Naive thymus-derived CD4-positive, alpha-beta T cell (primary cell): ENCODE measurements at regions of chr12 and their contacts with region 1.

Region 1: GRCh38 chr12:123131879-123132452 is 18.9 kb downstream of the PITPNM2 start:
- DNase-seq: peak in 8 of 9 donors; percentile 34 to 83 (median 71)
- ATAC-seq: peak; percentile 96
- H3K4me3 ChIP-seq: peak overlapping the region; percentile 24
- H3K4me3 Mint-ChIP-seq: peak overlapping the region; percentile 75 to 83 (median 79)
- H3K27ac ChIP-seq: peak overlapping the region; percentile 84
- H3K27ac Mint-ChIP-seq: peak overlapping the region; percentile 89 to 98 (median 95)
- H3K4me1 ChIP-seq: peaks cover 0 to 27% of the 10 kb centered on the region in 2 donors
- H3K4me1 Mint-ChIP-seq: peaks cover 24 to 70% (median 55%) of the 10 kb centered on the region in 7 donors
- H3K27me3 ChIP-seq: no peaks in the 10 kb centered on the region
- H3K27me3 Mint-ChIP-seq: no peaks in the 10 kb centered on the region

Region 2: GRCh38 chr12:122740351-122740750 is 391.6 kb before region 1 on chr12:
- CTCF ChIA-PET with region 1: no interaction called
- POLR2A ChIA-PET with region 1: no interaction called
- intact Hi-C with region 1: no loop called
- DNase-seq: no peak
- ATAC-seq: no peak
- H3K4me3 ChIP-seq: no peak overlapping the region
- H3K4me3 Mint-ChIP-seq: no peak overlapping the region
- H3K27ac ChIP-seq: no peak overlapping the region
- H3K27ac Mint-ChIP-seq: no peak overlapping the region
- H3K4me1 ChIP-seq: no peaks in the 10 kb centered on the region
- H3K4me1 Mint-ChIP-seq: peaks cover 0 to 8% (median 0%) of the 10 kb centered on the region in 7 donors
- H3K27me3 ChIP-seq: no peaks in the 10 kb centered on the region
- H3K27me3 Mint-ChIP-seq: no peaks in the 10 kb centered on the region

Region 3: DNA sequence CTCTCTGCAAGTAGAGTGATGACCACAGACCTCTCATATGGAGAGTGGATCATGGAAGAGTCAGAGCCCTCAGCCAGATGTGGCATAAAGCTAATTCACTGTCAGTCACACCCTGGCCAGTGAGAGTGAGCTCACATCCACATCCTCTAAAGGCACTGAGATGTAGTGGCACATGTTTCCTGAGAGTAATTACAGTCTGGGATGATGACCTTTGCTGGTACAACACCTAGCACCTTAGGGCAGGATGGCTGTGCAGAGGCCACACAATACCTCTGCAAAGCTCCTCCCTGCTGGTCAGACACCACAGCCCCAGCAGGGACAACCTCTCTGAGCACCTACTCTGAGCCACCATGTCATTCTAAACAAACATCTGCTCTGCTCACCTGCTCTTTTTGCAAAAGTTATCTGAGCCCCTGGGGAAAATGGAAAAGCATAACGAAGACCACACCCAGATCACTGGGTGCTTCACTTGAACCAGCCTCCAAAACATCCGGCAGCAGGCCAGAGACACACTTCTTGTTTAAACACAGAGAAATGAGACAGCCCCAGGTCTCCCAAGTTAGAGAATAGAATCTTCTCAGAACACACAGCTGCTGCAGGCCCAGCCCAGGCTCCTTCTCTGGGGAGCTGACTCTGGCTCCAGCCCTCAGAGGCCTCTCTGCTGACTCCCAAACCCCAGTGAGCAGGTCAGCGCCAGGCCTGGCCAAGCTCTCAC is 11.4 kb before region 1 on chr12:
- CTCF ChIA-PET with region 1: interaction called, 6 read pairs
- POLR2A ChIA-PET with region 1: interaction called, 97 read pairs
- intact Hi-C with region 1: loop called in 1 of 2 experiments (anchors 1 kb)
- DNase-seq: peak in 7 of 9 donors; percentile 27 to 76 (median 67)
- ATAC-seq: peak; percentile 60
- H3K4me3 ChIP-seq: no peak overlapping the region
- H3K4me3 Mint-ChIP-seq: peak overlapping the region; percentile 66 to 83 (median 73)
- H3K27ac ChIP-seq: peak overlapping the region; percentile 71
- H3K27ac Mint-ChIP-seq: peak overlapping the region; percentile 91 to 100 (median 96)
- H3K4me1 ChIP-seq: peaks cover 3 to 68% of the 10 kb centered on the region in 2 donors
- H3K4me1 Mint-ChIP-seq: peaks cover 40 to 81% (median 75%) of the 10 kb centered on the region in 7 donors
- H3K27me3 ChIP-seq: no peaks in the 10 kb centered on the region
- H3K27me3 Mint-ChIP-seq: no peaks in the 10 kb centered on the region

Region 4: GRCh38 chr12:123163227-123163626 is 31.3 kb after region 1 on chr12:
- CTCF ChIA-PET with region 1: no interaction called
- POLR2A ChIA-PET with region 1: interaction called, 4 read pairs
- intact Hi-C with region 1: loop called in 1 of 2 experiments (anchors 1 kb)
- DNase-seq: no peak
- ATAC-seq: no peak
- H3K4me3 ChIP-seq: no peak overlapping the region
- H3K4me3 Mint-ChIP-seq: no peak overlapping the region
- H3K27ac ChIP-seq: no peak overlapping the region
- H3K27ac Mint-ChIP-seq: peak overlapping the region in 1 of 9 donors; percentile 14
- H3K4me1 ChIP-seq: no peaks in the 10 kb centered on the region
- H3K4me1 Mint-ChIP-seq: no peaks in the 10 kb centered on the region
- H3K27me3 ChIP-seq: no peaks in the 10 kb centered on the region
- H3K27me3 Mint-ChIP-seq: no peaks in the 10 kb centered on the region

Region 5: DNA sequence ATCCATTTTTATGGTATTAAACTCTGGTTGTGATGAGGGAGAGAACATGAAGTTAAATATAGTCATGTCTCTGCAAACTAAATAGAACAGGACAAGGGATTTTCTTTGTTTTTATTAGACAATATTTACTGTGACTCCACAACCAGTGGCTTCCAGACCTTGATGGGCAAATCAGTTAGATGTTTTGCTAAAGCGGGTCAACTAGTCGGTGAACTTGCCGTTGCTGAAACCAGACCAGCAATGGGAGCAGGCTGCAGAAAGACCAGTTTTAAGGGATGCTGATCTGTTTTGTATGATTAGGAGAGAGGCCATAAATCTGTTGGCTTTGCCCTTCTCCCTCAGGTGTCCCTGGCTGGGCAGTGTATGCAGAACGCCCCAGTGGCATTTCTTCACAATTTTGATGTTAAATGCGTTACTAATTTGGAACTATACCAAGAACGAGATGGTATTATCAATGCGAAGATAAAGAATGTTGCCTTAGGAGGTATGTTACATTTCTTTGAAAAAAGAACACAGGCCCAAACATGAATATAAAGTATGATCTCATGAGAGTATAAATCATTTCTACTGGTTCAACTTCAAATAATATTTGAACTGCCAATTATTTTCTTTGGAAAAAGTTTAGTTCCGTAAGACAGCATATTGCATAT is 558.4 kb after region 1 on chr12:
- CTCF ChIA-PET with region 1: no interaction called
- POLR2A ChIA-PET with region 1: no interaction called
- intact Hi-C with region 1: no loop called
- DNase-seq: no peak
- ATAC-seq: no peak
- H3K4me3 ChIP-seq: no peak overlapping the region
- H3K4me3 Mint-ChIP-seq: no peak overlapping the region
- H3K27ac ChIP-seq: no peak overlapping the region
- H3K27ac Mint-ChIP-seq: no peak overlapping the region
- H3K4me1 ChIP-seq: no peaks in the 10 kb centered on the region
- H3K4me1 Mint-ChIP-seq: no peaks in the 10 kb centered on the region
- H3K27me3 ChIP-seq: no peaks in the 10 kb centered on the region
- H3K27me3 Mint-ChIP-seq: no peaks in the 10 kb centered on the region